HepG2 (cell line): ENCODE measurements at regions of chr4 and their contacts with region 1.

Region 1: GRCh38 chr4:107824353-107825071 is at the start of gene SGMS2:
- DNase-seq: peak; percentile 55
- ATAC-seq: peak; percentile 82
- H3K4me3 ChIP-seq: peak within 1 kb of the TSS; percentile 60 to 91 (median 80)
- H3K27ac ChIP-seq: no peak within 1 kb of the TSS
- H3K4me1 ChIP-seq: peaks cover 28% of the 10 kb centered on the region
- H3K27me3 ChIP-seq: peaks cover 0 to 1% of the 10 kb centered on the region in 2 experiments; a peak in 2 of 5 replicates
- CTCF ChIP-seq: 0 out of 2 replicates have a peak, but pooled peaks have one; percentile 4
- EP300 ChIP-seq: no peak
- POLR2A ChIP-seq: no peak
- RAD21 ChIP-seq: no peak
- total RNA-seq, gene SGMS2: 1.2 and 1.3 TPM in 2 replicates

Region 2: DNA sequence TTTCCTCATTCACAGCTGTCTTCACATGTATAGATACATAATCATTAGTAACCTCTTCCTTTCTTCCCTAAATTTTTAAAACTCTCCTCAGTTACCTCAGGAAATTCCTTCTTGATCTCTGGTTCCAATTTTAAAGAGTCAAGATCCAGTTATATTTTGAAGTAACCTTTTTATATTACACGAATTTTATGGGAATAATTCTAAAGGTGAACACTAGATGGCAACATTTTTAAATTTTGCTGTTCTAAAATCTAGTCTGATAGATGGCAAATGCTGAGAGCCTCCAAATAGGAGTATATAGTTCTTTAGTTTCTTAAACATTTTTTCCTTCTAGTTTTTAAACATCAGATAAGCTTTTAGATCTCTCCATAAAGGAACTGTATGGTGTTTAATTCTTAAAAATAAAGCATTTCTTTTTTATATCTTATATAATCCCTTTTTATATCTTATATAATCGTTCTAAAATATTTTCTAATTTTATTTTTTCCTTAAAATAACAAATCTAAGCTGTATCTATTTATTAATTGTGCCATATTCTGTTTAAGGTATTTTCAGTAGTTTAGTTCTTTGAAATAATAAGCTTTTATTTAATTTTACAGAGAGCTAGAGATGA is 66.5 kb before region 1 on chr4:
- CTCF ChIA-PET with region 1: no interaction called
- POLR2A ChIA-PET with region 1: no interaction called
- in situ Hi-C with region 1: no loop called
- intact Hi-C with region 1: loop called (anchors 2 kb)
- DNase-seq: peak; percentile 28
- ATAC-seq: no peak
- H3K4me3 ChIP-seq: no peak overlapping the region
- H3K27ac ChIP-seq: no peak overlapping the region
- H3K4me1 ChIP-seq: peaks cover 17% of the 10 kb centered on the region
- H3K27me3 ChIP-seq: no peaks in the 10 kb centered on the region
- CTCF ChIP-seq: no peak
- EP300 ChIP-seq: no peak
- POLR2A ChIP-seq: no peak
- RAD21 ChIP-seq: no peak

Region 3: GRCh38 chr4:107863850-107864371 is 39.4 kb after region 1 on chr4:
- CTCF ChIA-PET with region 1: no interaction called
- POLR2A ChIA-PET with region 1: no interaction called
- in situ Hi-C with region 1: no loop called
- intact Hi-C with region 1: loop called (anchors 5 kb)
- DNase-seq: peak; percentile 52
- ATAC-seq: peak; percentile 99
- H3K4me3 ChIP-seq: no peak overlapping the region
- H3K27ac ChIP-seq: no peak overlapping the region
- H3K4me1 ChIP-seq: peaks cover 9% of the 10 kb centered on the region
- H3K27me3 ChIP-seq: no peaks in the 10 kb centered on the region
- CTCF ChIP-seq: no peak
- EP300 ChIP-seq: no peak
- POLR2A ChIP-seq: no peak
- RAD21 ChIP-seq: no peak

Region 4: GRCh38 chr4:107913281-107913899 is 88.9 kb after region 1 on chr4:
- CTCF ChIA-PET with region 1: no interaction called
- POLR2A ChIA-PET with region 1: no interaction called
- in situ Hi-C with region 1: no loop called
- intact Hi-C with region 1: loop called (anchors 5 kb)
- DNase-seq: peak; percentile 59
- ATAC-seq: peak; percentile 82
- H3K4me3 ChIP-seq: no peak overlapping the region
- H3K27ac ChIP-seq: no peak overlapping the region
- H3K4me1 ChIP-seq: no peaks in the 10 kb centered on the region
- H3K27me3 ChIP-seq: no peaks in the 10 kb centered on the region
- CTCF ChIP-seq: peak; percentile 80
- EP300 ChIP-seq: no peak
- POLR2A ChIP-seq: no peak
- RAD21 ChIP-seq: peak; percentile 77

Region 5: GRCh38 chr4:107989537-107990386 is 165.2 kb after region 1 on chr4 and contains the start of gene HADH:
- CTCF ChIA-PET with region 1: no interaction called
- POLR2A ChIA-PET with region 1: no interaction called
- in situ Hi-C with region 1: no loop called
- intact Hi-C with region 1: loop called (anchors 10 kb)
- DNase-seq: peak; percentile 80
- ATAC-seq: peak; percentile 96
- H3K4me3 ChIP-seq: peak within 1 kb of the TSS; percentile 83 to 98 (median 89)
- H3K27ac ChIP-seq: peak within 1 kb of the TSS; percentile 84
- H3K4me1 ChIP-seq: peaks cover 54% of the 10 kb centered on the region
- H3K27me3 ChIP-seq: no peaks in the 10 kb centered on the region
- CTCF ChIP-seq: 0 out of 2 replicates have a peak, but pooled peaks have one; percentile 8
- EP300 ChIP-seq: no peak
- POLR2A ChIP-seq: peak; percentile 83 to 84
- RAD21 ChIP-seq: peak; percentile 43; the same call in 1 of the 2 replicates
- total RNA-seq, gene HADH: 33.9 and 60.6 TPM in 2 replicates